Right ventricle myocardium inferior (tissue), 1 donor: ENCODE measurements at regions of chr12 and their contacts with region 1.

Region 1: GRCh38 chr12:19847294-19848059 is 408.2 kb downstream of the AEBP2 start:
- DNase-seq: no peak
- ATAC-seq: peak; percentile 91

Region 2: DNA sequence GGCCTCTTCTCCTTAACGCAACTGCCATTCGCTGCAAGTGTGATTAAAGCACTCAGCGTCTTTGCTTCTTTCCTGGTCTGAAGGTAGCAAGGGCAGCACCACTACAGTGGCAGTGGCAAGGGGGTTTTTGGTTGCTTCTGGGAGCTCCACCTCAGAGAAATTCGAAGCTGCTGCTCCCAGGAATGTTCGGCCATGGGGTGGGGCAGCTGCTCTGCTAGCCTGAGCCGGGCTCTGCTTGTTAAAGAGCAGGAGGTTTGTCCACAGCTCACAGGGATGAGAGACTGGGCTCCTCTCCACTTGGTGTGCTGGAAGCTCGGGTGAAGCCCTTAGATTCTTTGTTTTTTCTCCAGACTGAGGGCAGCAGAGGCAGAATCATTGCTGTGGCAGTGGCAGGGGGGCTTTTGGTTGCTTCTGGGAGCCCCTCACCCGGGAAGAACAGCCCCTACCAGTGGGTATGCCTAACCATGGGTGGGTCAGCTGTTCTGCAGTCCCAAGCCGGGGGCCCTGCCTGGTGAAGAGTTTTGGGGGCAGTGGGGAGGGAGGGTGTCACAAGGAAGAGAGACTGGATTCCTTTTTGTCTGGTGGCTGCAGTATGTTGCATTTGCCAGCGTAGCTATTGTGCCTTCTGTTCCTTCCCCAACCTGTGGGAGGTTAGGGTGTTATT is 68.0 kb before region 1 on chr12:
- intact Hi-C with region 1: loop called (anchors 5 kb)
- DNase-seq: no peak
- ATAC-seq: peak; percentile 85

Region 3: GRCh38 chr12:19800884-19801283 is 46.6 kb before region 1 on chr12:
- intact Hi-C with region 1: no loop called
- DNase-seq: no peak
- ATAC-seq: peak; percentile 34

Region 4: DNA sequence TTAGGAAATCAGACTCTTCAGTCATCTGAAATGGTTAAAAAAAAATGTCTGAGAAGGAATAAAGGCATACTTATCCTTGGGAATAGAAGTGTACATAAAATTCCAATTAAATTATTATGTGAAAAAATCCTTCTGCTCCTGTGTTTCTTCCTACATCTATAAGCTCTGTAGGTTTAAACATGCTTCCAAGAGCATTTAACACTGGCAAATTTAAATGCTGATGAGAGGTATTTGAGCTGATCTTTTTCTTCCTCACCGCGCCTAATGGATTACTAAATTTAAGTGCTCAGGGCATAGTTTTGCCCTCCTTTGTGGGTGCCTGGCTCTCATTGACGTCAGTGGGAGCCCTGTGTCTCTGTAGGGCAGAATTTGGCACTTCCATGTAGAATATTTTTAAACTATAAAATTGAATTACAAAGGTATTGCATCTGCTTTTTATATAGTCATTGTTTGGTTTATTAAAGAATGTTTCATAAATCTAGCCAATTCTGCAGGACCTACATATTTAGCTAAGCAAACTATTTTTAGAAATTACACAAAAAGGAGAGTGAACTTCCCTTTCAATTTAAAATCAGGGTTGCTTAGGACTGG is 36.5 kb after region 1 on chr12:
- intact Hi-C with region 1: loop called (anchors 5 kb)
- DNase-seq: no peak
- ATAC-seq: no peak

Region 5: GRCh38 chr12:19953734-19954133 is 106.3 kb after region 1 on chr12:
- intact Hi-C with region 1: loop called (anchors 1 kb)
- DNase-seq: no peak
- ATAC-seq: peak; percentile 66

Region 6: GRCh38 chr12:20006871-20007730 is 159.6 kb after region 1 on chr12:
- intact Hi-C with region 1: loop called (anchors 10 kb)
- DNase-seq: no peak
- ATAC-seq: no peak

Region 7: DNA sequence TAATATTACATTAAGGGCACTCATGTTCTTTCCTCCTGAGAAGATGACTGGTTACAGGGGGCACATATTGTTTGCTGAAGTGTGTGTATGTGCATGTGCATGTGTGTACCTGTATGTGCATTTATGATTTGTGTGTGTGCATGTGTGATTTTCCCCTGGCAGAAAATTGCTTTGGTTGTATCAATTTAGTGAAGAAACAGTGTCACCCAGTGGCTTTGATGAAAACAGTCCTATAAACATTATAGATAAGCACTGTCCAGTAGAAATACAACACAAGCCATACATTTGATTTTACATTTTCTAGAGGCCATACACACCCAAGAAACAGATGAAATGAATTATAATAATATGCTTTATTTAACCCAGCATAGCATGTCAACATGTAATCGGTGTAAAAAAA is 529.5 kb after region 1 on chr12:
- intact Hi-C with region 1: loop called (anchors 5 kb)
- DNase-seq: no peak
- ATAC-seq: no peak